K562 (cell line): ENCODE measurements at regions of chr11 and their contacts with region 1.

Region 1: DNA sequence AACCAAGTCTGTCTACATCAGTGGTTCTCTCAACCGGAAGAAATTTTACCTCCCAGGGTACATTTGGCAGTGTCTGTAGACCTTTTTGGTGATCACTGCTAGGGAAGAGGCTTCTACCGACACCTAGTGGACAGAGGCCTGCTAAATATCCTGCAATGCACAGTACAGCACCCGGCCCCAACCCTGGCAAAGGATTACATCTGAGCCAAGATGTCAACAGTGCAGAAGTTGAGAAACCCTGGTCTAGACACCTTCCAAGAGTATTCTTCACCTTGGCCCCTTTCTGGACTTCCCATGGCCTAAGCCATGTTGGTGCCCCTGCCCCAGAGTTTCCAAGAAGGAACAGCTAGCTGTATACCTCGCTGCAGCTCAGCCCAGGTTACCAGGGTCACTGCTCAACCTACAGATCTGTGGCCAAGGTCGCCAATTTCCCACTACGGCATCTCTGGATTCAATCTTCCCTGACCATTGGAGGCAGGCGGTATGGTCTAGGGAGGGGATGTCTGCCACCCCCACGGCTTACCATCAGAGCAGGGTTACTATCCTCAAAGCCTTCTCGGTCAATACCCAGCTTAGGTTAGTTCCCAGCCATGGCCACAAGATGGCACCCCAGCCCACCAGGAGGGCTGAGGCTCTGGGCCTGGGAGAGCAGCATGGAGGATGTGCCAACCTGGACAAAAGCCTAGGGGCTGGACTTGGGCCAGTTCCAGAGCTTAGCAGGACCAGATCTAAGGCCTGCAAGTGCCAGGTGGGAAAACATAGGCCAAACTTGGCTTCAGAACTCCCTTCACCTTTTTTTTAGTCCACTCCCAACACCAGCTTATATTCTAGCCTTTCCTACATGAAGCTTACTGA is 3.7 kb upstream of the KCNC1 start:
- DNase-seq: peak; percentile 75 to 83 (median 78)
- ATAC-seq: peak; percentile 97
- H3K4me3 ChIP-seq: no peak overlapping the region
- H3K27ac ChIP-seq: no peak overlapping the region
- H3K4me1 ChIP-seq: peaks cover 0 to 12% of the 10 kb centered on the region in 2 experiments; a peak in 2 of 5 replicates
- H3K27me3 ChIP-seq: peaks cover 0 to 18% of the 10 kb centered on the region in 2 experiments; a peak in 2 of 5 replicates
- CTCF ChIP-seq: peak; percentile 81 to 90 (median 86)
- EP300 ChIP-seq: no peak
- POLR2A ChIP-seq: no peak
- RAD21 ChIP-seq: peak; percentile 71 to 84

Region 2: DNA sequence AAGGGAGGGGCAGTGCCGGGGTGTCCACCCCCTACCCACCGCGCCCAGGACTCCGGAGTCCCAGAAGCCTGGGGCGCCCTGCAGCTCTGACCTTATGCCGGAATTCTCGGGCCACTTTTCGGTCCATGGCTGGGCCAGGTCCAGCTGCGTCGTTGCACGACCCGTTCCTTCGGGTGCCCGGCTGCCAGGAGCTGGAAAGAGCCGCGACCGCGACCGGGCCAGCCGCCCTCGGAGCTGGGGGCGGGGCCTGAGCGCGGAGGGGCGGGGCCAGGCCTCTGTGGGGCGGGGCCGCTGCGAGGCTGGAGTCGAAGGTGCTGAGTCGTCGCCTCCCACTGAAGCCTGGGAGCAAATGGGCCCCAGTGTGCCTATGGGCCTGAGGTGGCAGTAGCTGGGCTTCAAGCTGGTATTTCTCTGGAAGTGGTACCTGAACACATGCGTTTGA is 186.6 kb before region 1 on chr11 and contains the start of gene USH1C:
- CTCF ChIA-PET with region 1: no interaction called
- POLR2A ChIA-PET with region 1: no interaction called
- in situ Hi-C with region 1: no loop called
- intact Hi-C with region 1: no loop called
- DNase-seq: peak; percentile 63 to 97 (median 95)
- ATAC-seq: peak; percentile 98
- H3K4me3 ChIP-seq: peak within 1 kb of the TSS; percentile 25
- H3K27ac ChIP-seq: no peak within 1 kb of the TSS; the same call in 2 of the 3 replicates
- H3K4me1 ChIP-seq: peaks cover 0 to 22% of the 10 kb centered on the region in 2 experiments; a peak in 2 of 5 replicates
- H3K27me3 ChIP-seq: peaks cover 10 to 51% of the 10 kb centered on the region in 2 experiments; a peak in 3 of 5 replicates
- CTCF ChIP-seq: no peak
- EP300 ChIP-seq: no peak
- POLR2A ChIP-seq: no peak
- RAD21 ChIP-seq: no peak
- polyA plus RNA-seq, gene USH1C: not detected

Region 3: GRCh38 chr11:17598700-17599459 is 132.0 kb before region 1 on chr11:
- CTCF ChIA-PET with region 1: interaction called, 10 read pairs
- POLR2A ChIA-PET with region 1: interaction called, 7 read pairs
- in situ Hi-C with region 1: loop called (anchors 10 kb)
- intact Hi-C with region 1: loop called (anchors 1 kb)
- DNase-seq: peak; percentile 67 to 78 (median 75)
- ATAC-seq: peak; percentile 96
- H3K4me3 ChIP-seq: no peak overlapping the region
- H3K27ac ChIP-seq: no peak overlapping the region
- H3K4me1 ChIP-seq: no peaks in the 10 kb centered on the region
- H3K27me3 ChIP-seq: peaks cover 0 to 16% of the 10 kb centered on the region in 2 experiments; a peak in 3 of 5 replicates
- CTCF ChIP-seq: peak; percentile 91 to 94 (median 94)
- EP300 ChIP-seq: no peak
- POLR2A ChIP-seq: no peak
- RAD21 ChIP-seq: peak; percentile 73 to 89

Region 4: GRCh38 chr11:17790453-17790852 is 59.6 kb after region 1 on chr11:
- CTCF ChIA-PET with region 1: no interaction called
- POLR2A ChIA-PET with region 1: no interaction called
- in situ Hi-C with region 1: no loop called
- intact Hi-C with region 1: no loop called
- DNase-seq: no peak
- ATAC-seq: no peak
- H3K4me3 ChIP-seq: no peak overlapping the region
- H3K27ac ChIP-seq: no peak overlapping the region
- H3K4me1 ChIP-seq: peaks cover 0 to 6% of the 10 kb centered on the region in 2 experiments; a peak in 1 of 5 replicates
- H3K27me3 ChIP-seq: no peaks in the 10 kb centered on the region
- CTCF ChIP-seq: no peak
- EP300 ChIP-seq: no peak
- POLR2A ChIP-seq: no peak
- RAD21 ChIP-seq: no peak

Region 5: GRCh38 chr11:17906436-17906835 is 175.6 kb after region 1 on chr11:
- CTCF ChIA-PET with region 1: no interaction called
- POLR2A ChIA-PET with region 1: no interaction called
- in situ Hi-C with region 1: no loop called
- intact Hi-C with region 1: loop called (anchors 10 kb)
- DNase-seq: peak; percentile 16 to 40 (median 25)
- ATAC-seq: peak; percentile 87
- H3K4me3 ChIP-seq: no peak overlapping the region
- H3K27ac ChIP-seq: no peak overlapping the region
- H3K4me1 ChIP-seq: no peaks in the 10 kb centered on the region
- H3K27me3 ChIP-seq: no peaks in the 10 kb centered on the region
- CTCF ChIP-seq: peak; percentile 22 to 46 (median 45); a peak in 3 of 6 replicates
- EP300 ChIP-seq: no peak
- POLR2A ChIP-seq: no peak
- RAD21 ChIP-seq: peak in 1 of 2 experiments; percentile 45; a peak in 2 of 4 replicates

Region 6: DNA sequence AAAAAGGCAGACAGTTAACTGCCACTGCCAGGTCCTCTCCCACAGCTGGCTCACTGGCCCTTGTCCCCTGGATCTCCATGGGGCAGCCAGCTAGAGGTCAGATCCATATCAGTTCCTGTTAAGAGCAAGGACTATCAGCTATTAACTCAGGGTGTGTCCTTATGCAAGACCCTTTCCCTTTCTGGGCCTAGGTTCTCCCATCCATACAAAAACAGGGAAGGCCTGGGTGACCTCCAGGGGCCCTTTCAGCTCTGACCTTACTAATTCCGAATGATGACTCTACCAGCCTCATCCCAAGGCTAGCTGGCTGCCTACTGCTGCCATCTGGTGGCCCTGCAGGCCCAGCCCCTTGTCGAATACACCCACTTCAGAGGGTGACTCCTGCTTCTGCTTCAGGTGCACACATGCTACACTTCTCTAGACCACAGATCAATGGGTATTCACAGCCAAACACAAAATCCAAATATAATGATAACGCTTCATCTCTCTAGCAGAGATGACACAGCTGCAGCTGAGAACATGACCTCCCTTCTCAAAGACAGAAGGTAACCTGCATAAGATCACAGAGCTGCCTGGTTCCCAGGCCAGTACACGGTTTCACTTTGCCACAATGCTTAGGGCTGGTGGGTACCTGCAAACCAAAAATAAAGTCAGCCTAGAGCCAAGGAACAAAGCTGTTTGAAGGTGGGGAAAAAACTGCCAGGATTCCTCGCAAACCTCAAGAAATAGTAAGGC is 247.9 kb after region 1 on chr11:
- CTCF ChIA-PET with region 1: interaction called, 14 read pairs
- POLR2A ChIA-PET with region 1: no interaction called
- in situ Hi-C with region 1: no loop called
- intact Hi-C with region 1: loop called (anchors 1 kb)
- DNase-seq: peak; percentile 49 to 63 (median 52)
- ATAC-seq: peak; percentile 90
- H3K4me3 ChIP-seq: no peak overlapping the region
- H3K27ac ChIP-seq: no peak overlapping the region
- H3K4me1 ChIP-seq: no peaks in the 10 kb centered on the region
- H3K27me3 ChIP-seq: no peaks in the 10 kb centered on the region
- CTCF ChIP-seq: peak; percentile 70 to 78 (median 70)
- EP300 ChIP-seq: no peak
- POLR2A ChIP-seq: no peak
- RAD21 ChIP-seq: peak; percentile 59 to 67; a peak in 3 of 4 replicates

Region 7: DNA sequence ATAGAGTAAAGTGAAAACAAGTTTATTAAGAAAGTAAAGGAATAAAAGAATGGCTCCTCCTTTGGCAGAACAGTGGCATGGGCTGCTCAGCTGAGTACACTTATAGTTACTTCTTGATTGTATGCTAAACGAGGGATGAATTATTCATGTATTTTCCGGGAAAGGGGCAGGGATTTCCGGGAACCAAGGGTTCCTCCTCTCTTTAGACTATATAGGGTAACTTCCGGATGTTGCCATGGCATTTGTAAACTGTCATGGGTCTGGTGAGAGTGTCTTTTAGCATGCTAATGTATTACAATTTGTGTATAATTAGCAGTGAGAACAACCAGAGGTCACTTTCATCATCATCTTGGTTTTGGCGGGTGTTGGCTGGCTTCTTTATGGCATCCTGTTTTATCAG is 926.8 kb after region 1 on chr11:
- CTCF ChIA-PET with region 1: no interaction called
- POLR2A ChIA-PET with region 1: no interaction called
- in situ Hi-C with region 1: no loop called
- intact Hi-C with region 1: no loop called
- DNase-seq: peak in 1 of 4 experiments; percentile 18
- ATAC-seq: no peak
- H3K4me3 ChIP-seq: no peak overlapping the region
- H3K27ac ChIP-seq: no peak overlapping the region
- H3K4me1 ChIP-seq: no peaks in the 10 kb centered on the region; a peak in 1 of 5 replicates
- H3K27me3 ChIP-seq: no peaks in the 10 kb centered on the region
- CTCF ChIP-seq: no peak
- EP300 ChIP-seq: no peak
- POLR2A ChIP-seq: no peak
- RAD21 ChIP-seq: no peak